Naive thymus-derived CD4-positive, alpha-beta T cell (primary cell): ENCODE measurements at regions of chr10 and their contacts with region 1.

Region 1: DNA sequence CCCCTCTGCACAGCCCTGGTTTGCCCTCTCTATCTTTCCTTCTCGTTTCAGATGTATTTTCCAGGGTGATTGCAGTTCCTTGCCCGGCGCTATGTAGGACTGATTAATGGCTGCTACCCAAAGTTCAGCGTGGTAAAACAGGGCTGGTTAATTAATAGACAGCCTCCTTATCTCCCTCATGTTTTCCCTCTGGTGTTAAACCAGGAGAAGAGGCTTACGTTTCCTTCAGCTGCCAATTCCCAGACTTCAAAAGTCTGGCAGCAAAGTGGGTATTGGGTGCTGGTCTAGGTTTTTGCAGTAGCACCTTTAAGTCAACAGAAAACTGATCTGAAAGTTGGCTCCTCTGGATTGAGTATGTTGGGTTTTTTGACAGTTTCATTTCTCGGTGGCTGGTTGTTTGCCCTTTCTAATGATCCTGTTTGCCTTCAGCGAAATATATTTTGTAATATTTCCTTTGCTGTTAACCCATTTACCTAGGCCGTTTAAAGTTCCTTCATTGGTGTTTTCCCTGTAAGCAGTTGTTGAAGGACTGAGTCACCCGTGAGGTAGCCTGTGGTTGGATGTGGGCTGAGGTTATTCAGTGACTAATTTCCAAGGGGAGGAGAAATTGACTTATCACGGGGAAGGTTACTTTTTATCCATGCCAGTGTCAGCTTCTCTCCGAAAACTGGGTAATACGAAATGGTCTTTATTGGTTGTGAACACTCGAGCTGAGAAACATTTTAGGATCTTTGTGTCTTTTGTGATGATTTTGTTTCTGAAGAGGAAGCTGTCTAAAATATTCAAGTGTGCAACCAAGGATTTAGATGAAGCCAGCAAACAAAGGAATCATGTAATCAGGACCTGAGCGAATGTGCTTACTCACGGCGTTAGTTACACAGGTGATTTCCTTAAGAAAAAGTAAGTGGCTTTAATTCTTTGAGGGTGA is 257.2 kb downstream of the KIAA1217 start:
- DNase-seq: peak in 1 of 9 donors; percentile 69
- ATAC-seq: peak; percentile 42
- H3K4me3 ChIP-seq: no peak overlapping the region
- H3K4me3 Mint-ChIP-seq: peak overlapping the region in 1 of 10 donors; percentile 66
- H3K27ac ChIP-seq: no peak overlapping the region
- H3K27ac Mint-ChIP-seq: peak overlapping the region in 1 of 9 donors; percentile 83
- H3K4me1 ChIP-seq: no peaks in the 10 kb centered on the region
- H3K4me1 Mint-ChIP-seq: peaks cover 4 to 49% (median 14%) of the 10 kb centered on the region in 7 donors
- H3K27me3 ChIP-seq: no peaks in the 10 kb centered on the region
- H3K27me3 Mint-ChIP-seq: peaks cover 0 to 10% (median 8%) of the 10 kb centered on the region in 5 donors

Region 2: GRCh38 chr10:24383681-24384106 is 82.5 kb before region 1 on chr10:
- CTCF ChIA-PET with region 1: no interaction called
- POLR2A ChIA-PET with region 1: no interaction called
- intact Hi-C with region 1: loop called in 1 of 2 experiments (anchors 5 kb)
- DNase-seq: peak in 1 of 9 donors; percentile 74
- ATAC-seq: no peak
- H3K4me3 ChIP-seq: no peak overlapping the region
- H3K4me3 Mint-ChIP-seq: no peak overlapping the region
- H3K27ac ChIP-seq: no peak overlapping the region
- H3K27ac Mint-ChIP-seq: peak overlapping the region in 1 of 9 donors; percentile 57
- H3K4me1 ChIP-seq: no peaks in the 10 kb centered on the region
- H3K4me1 Mint-ChIP-seq: peaks cover 0 to 11% (median 0%) of the 10 kb centered on the region in 7 donors
- H3K27me3 ChIP-seq: no peaks in the 10 kb centered on the region
- H3K27me3 Mint-ChIP-seq: peaks cover 2 to 40% (median 14%) of the 10 kb centered on the region in 5 donors

Region 3: GRCh38 chr10:24449321-24449740 is 16.8 kb before region 1 on chr10:
- CTCF ChIA-PET with region 1: no interaction called
- POLR2A ChIA-PET with region 1: no interaction called
- intact Hi-C with region 1: loop called in 1 of 2 experiments (anchors 2 kb)
- DNase-seq: no peak
- ATAC-seq: no peak
- H3K4me3 ChIP-seq: no peak overlapping the region
- H3K4me3 Mint-ChIP-seq: peak overlapping the region in 1 of 10 donors; percentile 10
- H3K27ac ChIP-seq: no peak overlapping the region
- H3K27ac Mint-ChIP-seq: peak overlapping the region in 1 of 9 donors; percentile 35
- H3K4me1 ChIP-seq: peaks cover 3 to 7% of the 10 kb centered on the region in 2 donors
- H3K4me1 Mint-ChIP-seq: peaks cover 7 to 21% (median 9%) of the 10 kb centered on the region in 7 donors
- H3K27me3 ChIP-seq: peaks cover 0 to 3% of the 10 kb centered on the region in 2 donors
- H3K27me3 Mint-ChIP-seq: peaks cover 18 to 44% (median 25%) of the 10 kb centered on the region in 5 donors

Region 4: DNA sequence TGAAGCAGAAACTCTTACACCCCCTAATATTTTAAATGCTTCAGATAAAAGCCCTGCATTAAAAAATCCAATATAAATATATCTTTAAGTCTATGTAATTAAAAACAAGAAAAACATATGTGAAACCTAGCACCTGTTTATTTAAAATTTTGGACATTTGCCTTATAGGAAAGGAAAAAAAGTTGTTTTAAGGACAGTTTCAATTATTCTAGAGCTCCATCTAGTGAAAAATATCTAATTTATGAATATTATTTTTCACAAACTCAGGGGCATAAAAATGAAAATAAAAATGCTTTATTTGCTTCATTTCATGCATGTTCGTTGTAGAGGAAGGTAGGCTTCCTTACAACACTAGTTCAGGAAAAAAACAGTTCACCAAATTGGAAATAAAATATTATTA is 523.7 kb after region 1 on chr10:
- CTCF ChIA-PET with region 1: no interaction called
- POLR2A ChIA-PET with region 1: no interaction called
- intact Hi-C with region 1: no loop called
- DNase-seq: peak in 1 of 9 donors; percentile 2
- ATAC-seq: no peak
- H3K4me3 ChIP-seq: no peak overlapping the region
- H3K4me3 Mint-ChIP-seq: no peak overlapping the region
- H3K27ac ChIP-seq: no peak overlapping the region
- H3K27ac Mint-ChIP-seq: no peak overlapping the region
- H3K4me1 ChIP-seq: no peaks in the 10 kb centered on the region
- H3K4me1 Mint-ChIP-seq: peaks cover 0 to 4% (median 0%) of the 10 kb centered on the region in 7 donors
- H3K27me3 ChIP-seq: no peaks in the 10 kb centered on the region
- H3K27me3 Mint-ChIP-seq: peaks cover 0 to 10% (median 0%) of the 10 kb centered on the region in 5 donors